BJ (cell line): ENCODE measurements at regions of chr3 and their contacts with region 1.

Region 1: GRCh38 chr3:129481766-129482332 is 41.8 kb downstream of the IFT122 start:
- DNase-seq: no peak
- H3K4me3 ChIP-seq: no peak overlapping the region
- H3K27me3 ChIP-seq: no peaks in the 10 kb centered on the region
- CTCF ChIP-seq: no peak

Region 2: DNA sequence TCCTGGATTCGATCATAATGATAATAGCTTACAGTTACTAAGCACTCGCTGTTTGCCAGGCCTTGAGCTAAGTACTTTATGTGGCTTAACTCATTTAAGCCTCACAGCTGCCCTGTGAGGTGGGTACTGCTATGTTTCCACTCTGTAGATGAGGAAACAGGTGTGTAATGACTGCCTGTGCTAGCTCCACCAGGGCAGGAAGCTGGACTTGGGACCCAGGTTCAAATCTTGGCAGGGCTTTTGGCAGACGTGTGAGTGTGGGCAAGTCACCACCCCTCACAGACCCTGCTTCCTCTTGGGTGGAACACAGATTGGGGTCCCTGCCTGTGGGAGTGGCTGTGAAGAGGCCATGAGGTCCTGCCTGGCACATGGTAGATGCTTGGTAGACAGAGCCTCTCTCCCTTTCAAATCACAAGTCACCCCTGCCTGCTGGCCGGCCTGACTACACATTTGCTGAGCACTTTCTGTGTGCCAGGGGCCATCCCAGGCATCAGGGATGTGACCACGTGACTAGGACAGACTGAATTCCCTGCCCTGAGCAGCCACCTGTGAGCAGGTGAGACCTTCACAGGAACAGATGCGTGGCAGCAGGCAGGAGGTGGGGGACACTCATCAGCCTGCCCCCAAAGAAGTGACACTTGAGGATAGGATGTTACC is 477.1 kb before region 1 on chr3:
- CTCF ChIA-PET with region 1: no interaction called
- POLR2A ChIA-PET with region 1: interaction called, 10 read pairs
- DNase-seq: no peak
- H3K4me3 ChIP-seq: no peak overlapping the region
- H3K27me3 ChIP-seq: peaks cover 41% of the 10 kb centered on the region
- CTCF ChIP-seq: no peak

Region 3: DNA sequence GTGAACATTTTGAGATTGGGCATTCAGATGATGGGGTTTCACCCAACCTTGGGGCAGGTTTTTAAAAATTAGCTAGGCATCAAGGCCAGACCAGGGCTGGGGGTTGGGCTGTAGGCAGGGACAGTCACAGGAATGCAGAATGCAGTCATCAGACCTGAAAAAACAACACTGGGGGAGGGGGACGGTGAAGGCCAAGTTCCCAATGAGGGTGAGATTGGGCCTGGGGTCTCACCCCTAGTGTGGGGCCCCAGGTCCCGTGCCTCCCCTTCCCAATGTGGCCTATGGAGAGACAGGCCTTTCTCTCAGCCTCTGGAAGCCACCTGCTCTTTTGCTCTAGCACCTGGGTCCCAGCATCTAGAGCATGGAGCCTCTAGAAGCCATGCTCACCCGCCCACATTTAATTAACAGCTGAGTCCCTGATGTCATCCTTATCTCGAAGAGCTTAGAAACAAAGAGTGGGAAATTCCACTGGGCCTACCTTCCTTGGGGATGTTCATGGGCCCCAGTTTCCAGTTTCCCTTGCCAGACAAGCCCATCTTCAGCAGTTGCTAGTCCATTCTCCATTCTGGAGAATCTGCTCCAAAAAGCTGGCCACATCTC is 52.7 kb after region 1 on chr3:
- CTCF ChIA-PET with region 1: no interaction called
- POLR2A ChIA-PET with region 1: no interaction called
- DNase-seq: no peak
- H3K4me3 ChIP-seq: no peak overlapping the region
- H3K27me3 ChIP-seq: peaks cover 3% of the 10 kb centered on the region
- CTCF ChIP-seq: no peak